Sciatic nerve (tissue), 2 donors: ENCODE measurements at regions of chr15 and their contacts with region 1.

Region 1: GRCh38 chr15:79015416-79015815 is 70.6 kb upstream of the CTSH start:
- DNase-seq: no peak
- ATAC-seq: no peak

Region 2: GRCh38 chr15:78950904-78951840 is 64.2 kb before region 1 on chr15:
- intact Hi-C with region 1: no loop called
- DNase-seq: no peak
- ATAC-seq: peak; percentile 80

Region 3: GRCh38 chr15:78992416-78993256 is 22.8 kb before region 1 on chr15:
- intact Hi-C with region 1: no loop called
- DNase-seq: no peak
- ATAC-seq: peak; percentile 23

Region 4: GRCh38 chr15:79192462-79193036 is 177.1 kb after region 1 on chr15:
- intact Hi-C with region 1: loop called (anchors 10 kb)
- DNase-seq: no peak
- ATAC-seq: no peak